AG04449 (cell line): ENCODE measurements at regions of chr1 and their contacts with region 1.

Region 1: GRCh38 chr1:18902523-18903290 is at the start of gene ALDH4A1:
- DNase-seq: peak; percentile 86
- H3K4me3 ChIP-seq: peak within 1 kb of the TSS; percentile 83
- CTCF ChIP-seq: no peak

Region 2: DNA sequence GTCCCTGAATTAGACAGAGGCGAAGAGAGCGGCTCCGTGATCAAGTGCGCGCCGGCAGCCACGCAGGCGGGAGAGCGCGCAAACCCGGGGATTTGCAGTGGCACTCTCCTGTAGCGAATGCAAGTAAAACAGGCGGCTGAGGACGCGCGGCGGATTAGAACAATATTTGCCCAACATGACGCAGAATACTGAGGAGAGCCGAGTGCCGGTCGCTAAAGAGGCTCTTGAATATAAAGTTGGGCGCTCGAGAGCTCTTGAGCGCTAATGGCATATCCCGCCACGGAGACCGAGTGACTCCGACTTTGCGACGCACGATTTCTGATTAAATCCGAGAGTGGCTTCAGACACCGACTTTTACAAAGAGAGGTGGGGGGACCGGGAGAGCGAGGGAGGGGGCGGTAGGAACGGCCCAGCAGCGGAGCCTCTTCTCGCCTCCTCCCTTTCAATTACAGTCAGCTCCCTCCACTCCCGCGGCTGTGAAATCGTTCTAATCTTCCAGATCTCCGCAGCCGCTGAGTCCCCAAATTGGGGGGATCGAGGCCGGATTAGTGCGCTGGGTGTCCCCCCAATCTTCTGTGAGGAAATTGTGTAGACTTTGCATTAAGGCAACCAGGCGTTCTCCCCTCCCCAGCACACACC is 269.8 kb before region 1 on chr1:
- CTCF ChIA-PET with region 1: no interaction called
- POLR2A ChIA-PET with region 1: no interaction called
- DNase-seq: no peak
- H3K4me3 ChIP-seq: no peak overlapping the region
- CTCF ChIP-seq: no peak

Region 3: GRCh38 chr1:18673975-18674374 is 228.7 kb before region 1 on chr1:
- CTCF ChIA-PET with region 1: no interaction called
- POLR2A ChIA-PET with region 1: no interaction called
- DNase-seq: no peak
- H3K4me3 ChIP-seq: no peak overlapping the region
- CTCF ChIP-seq: no peak

Region 4: GRCh38 chr1:18883636-18884418 is 18.9 kb before region 1 on chr1:
- CTCF ChIA-PET with region 1: interaction called, 16 read pairs
- POLR2A ChIA-PET with region 1: no interaction called
- DNase-seq: no peak
- H3K4me3 ChIP-seq: no peak overlapping the region
- CTCF ChIP-seq: peak; percentile 97

Region 5: DNA sequence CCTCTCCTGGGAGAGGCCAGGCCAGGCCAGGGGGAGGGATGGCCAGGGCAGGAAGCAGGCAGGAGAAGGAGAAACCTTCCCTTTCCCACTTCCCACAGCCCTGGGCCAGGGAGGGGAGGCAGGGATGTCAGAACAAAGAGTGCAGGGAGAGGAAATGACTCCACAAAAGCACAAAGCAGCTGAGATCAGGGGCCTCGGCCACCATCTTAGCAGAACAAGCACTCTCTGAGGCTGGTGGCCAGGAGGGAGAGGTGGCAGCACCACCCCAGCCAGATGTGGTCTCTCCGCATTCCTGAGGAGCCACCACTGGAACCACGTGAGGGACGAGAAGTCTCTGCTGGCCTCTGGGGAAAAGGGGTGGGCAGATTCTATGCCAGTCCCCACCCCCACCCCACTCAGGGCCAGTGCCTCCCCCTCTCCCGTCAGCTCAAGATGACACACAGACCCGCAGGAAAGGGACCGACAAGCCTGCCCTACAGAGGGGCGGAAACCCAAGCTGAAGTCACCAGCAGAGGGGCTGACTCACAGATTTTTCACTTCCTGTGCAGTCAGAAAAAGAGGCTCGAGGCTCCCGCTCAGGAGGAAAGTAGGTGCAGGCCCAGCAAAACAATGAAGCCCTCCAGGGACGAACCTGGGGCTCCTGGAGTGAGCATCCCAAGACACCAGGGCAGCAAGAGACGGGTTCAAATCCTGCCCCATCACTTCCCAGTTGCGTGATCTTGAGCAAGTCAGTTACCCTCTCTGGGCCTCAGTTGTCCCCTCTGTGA is 23.8 kb after region 1 on chr1:
- CTCF ChIA-PET with region 1: interaction called, 50 read pairs
- POLR2A ChIA-PET with region 1: no interaction called
- DNase-seq: no peak
- H3K4me3 ChIP-seq: peak overlapping the region; percentile 28
- CTCF ChIP-seq: no peak

Region 6: DNA sequence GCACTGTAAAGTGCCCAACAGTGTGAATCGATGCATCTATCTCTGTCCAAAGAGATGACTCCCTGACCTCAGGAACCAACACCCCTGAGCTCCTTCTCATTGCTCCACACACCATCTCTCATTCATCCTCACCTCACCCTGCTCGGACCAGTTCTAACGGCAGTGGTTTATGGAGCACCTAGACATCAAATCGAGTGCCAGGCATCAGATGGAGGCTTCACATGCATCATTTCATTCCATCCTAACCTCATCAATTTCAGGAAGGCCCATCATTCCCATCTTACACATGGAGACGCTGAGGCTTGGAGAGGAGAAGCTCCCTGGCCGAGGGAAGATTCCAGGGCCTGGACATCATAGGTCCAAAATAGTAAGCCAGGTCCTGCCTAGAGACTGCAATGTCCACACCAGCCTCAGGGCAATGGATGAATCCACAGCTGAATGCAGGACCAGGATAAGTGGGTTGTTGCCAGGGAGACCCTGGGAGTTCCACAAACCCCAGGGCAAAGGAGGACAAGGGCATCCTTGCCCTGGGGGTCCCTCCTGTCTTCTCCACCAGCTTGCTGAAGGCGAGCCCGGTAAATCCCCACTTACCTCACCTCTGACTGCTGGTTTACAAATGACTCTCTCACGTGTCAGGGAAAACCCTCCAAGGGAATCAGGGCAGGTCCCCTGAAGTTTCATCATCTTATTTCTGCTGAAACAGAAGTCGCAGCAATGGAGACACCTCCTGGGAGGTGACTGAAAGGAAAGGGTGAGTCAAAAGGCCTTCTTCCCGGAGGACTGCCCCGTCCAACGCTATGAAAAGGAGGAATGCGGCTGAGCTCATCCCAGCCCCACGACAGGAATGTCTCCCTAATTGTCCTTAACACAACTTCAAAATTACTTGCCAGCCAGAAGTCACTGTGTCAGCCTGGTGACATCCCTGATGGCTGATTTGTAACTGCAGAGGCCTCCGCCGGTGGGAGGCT is 62.8 kb after region 1 on chr1:
- CTCF ChIA-PET with region 1: interaction called, 42 read pairs
- POLR2A ChIA-PET with region 1: no interaction called
- DNase-seq: no peak
- H3K4me3 ChIP-seq: no peak overlapping the region
- CTCF ChIP-seq: no peak

Region 7: DNA sequence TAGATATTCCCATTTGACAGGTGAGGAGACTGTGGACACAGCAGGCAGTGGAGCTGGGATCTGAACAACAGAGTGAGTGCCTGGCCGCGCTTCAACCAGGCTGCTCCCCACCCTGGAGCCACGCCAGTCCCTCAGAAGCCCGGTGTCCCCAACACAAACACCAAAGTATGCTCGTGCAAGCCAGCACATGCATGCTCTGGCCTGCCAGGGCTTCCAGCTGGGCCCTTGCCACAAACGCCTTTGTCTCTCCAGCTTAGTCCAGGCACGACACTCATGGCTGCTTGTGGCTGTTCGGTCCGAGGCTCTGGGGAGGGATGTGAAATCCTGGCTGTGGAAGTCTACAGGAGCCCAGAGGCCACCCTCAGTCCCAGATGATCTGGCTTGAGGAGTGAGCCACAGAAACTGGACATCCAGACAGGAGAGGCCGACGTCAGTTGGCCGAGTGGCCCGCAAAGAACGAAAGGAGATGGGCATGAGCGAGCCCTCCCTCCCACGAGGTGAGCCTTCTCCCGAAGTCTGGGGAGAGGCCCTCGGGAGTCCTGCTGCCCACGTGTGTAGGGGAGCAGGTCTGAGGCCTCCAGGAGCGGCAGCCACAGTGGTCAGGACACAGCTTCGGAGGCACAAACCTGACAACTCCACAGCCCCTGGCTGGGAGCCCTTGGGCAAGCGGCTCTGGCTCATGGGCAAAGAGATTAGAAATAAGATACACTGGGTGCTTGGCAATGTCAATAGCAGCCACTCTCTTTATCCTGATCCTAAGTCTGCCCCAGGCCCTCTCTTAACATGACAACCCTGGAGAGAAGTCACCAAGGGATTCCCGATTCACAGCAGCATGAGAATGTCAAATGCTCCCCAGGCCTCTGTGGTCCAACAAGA is 170.8 kb after region 1 on chr1:
- CTCF ChIA-PET with region 1: interaction called, 85 read pairs
- POLR2A ChIA-PET with region 1: no interaction called
- DNase-seq: no peak
- H3K4me3 ChIP-seq: no peak overlapping the region
- CTCF ChIP-seq: no peak

Region 8: DNA sequence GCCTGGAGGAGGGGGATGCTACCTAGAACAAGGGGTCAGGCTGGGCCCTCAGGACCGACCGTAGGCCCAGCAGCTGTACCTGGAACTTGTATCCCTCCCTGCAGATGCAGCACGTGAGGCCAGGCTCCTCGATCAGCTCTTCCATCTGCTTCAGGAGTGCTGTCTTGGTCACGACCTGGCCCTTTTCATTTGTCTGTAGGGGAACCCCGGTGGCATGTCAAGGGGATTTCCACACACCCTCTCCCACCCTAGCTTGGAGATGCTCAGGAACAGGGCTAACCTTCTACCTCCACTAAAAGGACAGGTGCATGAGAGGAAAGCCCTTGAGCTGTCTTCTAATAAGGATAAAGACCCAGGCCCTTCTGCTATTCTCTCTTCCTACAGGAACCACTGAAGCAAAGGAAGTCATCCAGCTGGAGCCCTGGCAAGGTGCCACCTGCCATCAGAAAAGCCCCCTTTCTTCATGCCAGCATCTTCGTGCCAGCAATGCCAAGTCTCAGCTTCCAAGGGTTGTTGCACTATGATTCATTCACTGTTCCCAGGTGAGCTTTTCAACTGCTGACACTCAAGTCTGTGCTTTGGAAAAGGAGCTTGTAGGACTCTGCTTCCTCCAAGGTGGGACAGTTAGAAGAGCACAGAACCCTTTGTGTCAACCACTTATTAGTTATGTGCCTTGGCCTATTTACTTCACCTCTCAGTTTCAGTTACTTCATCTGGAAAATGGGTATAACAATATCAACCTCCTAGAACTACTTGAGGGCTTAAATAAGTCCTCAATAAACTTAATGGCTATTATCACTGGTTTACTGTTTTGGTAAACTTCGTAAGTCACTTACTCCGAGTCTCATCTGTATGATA is 185.3 kb after region 1 on chr1:
- CTCF ChIA-PET with region 1: interaction called, 117 read pairs
- POLR2A ChIA-PET with region 1: no interaction called
- DNase-seq: no peak
- H3K4me3 ChIP-seq: no peak overlapping the region
- CTCF ChIP-seq: no peak

Region 9: DNA sequence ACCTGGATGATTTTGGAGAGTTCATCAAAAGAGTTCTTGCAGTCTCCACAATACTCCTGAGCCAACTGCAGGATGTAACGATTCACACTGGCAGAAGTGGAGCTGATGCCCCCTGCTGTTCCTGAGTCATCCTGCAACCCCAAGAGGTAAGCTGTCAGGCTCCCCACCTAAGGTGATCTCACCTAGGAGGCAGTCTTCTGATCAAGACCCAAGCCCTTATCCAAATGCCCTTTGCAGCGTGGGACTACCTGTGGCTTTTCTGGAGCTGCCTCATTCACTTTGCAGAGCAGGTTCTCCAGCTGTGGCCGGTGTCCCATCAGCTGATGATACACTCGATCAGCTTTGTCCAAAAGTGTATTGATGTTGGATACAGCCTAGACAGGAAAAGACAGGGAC is 211.0 kb after region 1 on chr1:
- CTCF ChIA-PET with region 1: interaction called, 54 read pairs
- POLR2A ChIA-PET with region 1: no interaction called
- DNase-seq: no peak
- H3K4me3 ChIP-seq: no peak overlapping the region
- CTCF ChIP-seq: peak; percentile 64